Naive thymus-derived CD8-positive, alpha-beta T cell (primary cell): ENCODE measurements at regions of chr2 and their contacts with region 1.

Region 1: DNA sequence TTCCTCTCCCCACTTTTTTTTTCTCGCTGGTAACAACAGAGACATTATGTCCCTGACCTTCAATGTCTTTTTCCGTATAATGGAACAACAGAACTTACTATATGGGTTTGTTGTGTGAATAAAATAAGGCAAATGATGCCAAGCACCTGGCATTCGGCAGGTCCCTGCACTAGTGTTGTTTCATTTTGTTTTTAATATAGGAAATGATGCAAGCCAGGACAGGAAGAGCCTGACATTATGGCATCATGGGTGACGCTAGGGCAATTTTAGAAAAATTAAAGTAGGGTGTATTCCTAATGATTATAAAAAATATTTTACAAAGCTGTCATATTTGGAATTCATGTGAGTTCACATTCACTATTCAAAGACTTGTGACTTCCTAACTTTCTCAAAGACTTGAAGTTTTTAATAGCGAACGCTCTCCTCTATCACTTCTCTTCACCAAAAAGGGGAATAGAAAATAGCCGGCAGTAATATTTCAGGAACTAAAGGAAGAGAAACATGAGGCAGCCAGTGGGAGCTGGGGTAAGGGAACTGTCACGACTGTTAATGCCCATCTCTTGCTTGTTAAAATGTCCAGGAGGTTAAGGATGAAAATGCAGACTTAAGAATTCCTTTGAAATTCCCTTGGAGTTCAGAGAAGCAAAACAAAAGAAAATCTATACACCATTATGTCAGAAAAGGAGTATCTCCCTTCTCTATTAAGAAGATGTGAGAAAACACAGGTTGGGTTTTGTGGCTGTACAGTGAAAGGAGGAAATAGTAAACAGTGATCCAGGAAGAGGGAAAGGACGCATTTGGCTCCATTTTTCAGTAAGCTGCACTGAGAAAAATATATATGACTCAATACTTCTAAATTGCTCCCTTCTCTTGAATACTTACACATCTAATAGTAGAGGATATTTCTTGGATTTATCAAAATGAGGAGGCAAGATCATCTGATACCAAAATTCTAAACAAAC is 60.2 kb downstream of the DPP4 start:
- DNase-seq: peak in 5 of 10 donors; percentile 23 to 59 (median 41)
- ATAC-seq: peak in 1 of 2 donors; percentile 38
- H3K4me3 Mint-ChIP-seq: peak overlapping the region; percentile 16 to 84 (median 70)
- H3K27ac Mint-ChIP-seq: peak overlapping the region; percentile 93 to 99 (median 97)
- H3K4me1 Mint-ChIP-seq: peaks cover 30 to 71% (median 66%) of the 10 kb centered on the region in 4 donors
- H3K27me3 Mint-ChIP-seq: no peaks in the 10 kb centered on the region

Region 2: GRCh38 chr2:161998857-161999256 is 14.9 kb before region 1 on chr2:
- POLR2A ChIA-PET with region 1: interaction called, 13 read pairs
- DNase-seq: no peak
- ATAC-seq: no peak
- H3K4me3 Mint-ChIP-seq: no peak overlapping the region
- H3K27ac Mint-ChIP-seq: peak overlapping the region in 4 of 10 donors; percentile 5 to 83 (median 46)
- H3K4me1 Mint-ChIP-seq: peaks cover 27 to 54% (median 38%) of the 10 kb centered on the region in 4 donors
- H3K27me3 Mint-ChIP-seq: no peaks in the 10 kb centered on the region

Region 3: DNA sequence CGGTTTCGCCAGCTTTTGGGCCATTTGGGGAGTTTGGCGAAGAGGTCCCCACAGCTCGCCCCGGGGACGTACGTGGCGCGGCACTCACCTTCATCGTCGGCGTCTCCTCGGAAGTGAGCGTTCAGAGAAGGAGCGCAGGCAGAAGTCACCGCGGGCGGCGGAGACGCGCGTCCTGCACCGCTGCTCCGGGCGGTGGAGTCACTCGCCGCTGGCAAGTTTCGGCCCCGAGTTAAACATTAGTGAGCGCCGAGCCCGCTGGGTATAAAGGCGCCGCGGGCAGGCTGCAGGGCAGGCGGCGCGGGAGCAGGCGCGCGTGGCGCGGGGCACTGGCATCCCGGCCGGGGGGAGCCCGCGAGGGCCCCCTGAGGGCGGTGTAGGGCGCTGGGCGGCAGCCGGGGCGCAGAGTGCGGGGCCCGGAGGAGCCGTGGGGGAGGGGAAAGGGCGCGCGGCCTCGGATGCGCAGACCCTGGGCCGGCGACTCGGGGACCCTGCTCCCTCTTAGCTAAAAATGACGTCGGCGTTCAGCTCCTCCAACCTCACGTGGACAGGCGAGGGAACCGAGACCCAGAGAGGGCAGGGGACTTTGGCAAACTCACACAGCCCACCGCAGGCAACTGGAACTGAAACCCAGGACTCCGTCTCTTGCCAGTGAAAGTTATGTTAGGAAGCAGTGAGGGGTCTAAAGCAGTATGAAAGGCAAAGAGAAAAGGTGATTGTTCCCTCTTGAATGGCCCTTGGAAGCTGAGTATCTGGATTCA is 60.3 kb after region 1 on chr2 and contains the start of gene DPP4:
- POLR2A ChIA-PET with region 1: interaction called, 43 read pairs
- DNase-seq: peak; percentile 21 to 74 (median 55)
- ATAC-seq: peak; percentile 87 to 89
- H3K4me3 Mint-ChIP-seq: peak within 1 kb of the TSS; percentile 90 to 100 (median 96)
- H3K27ac Mint-ChIP-seq: peak within 1 kb of the TSS; percentile 82 to 99 (median 94)
- H3K4me1 Mint-ChIP-seq: peaks cover 30 to 50% (median 46%) of the 10 kb centered on the region in 4 donors
- H3K27me3 Mint-ChIP-seq: peaks cover 0 to 2% (median 0%) of the 10 kb centered on the region in 5 donors
- polyA plus RNA-seq, gene DPP4: 13.3 to 49.6 (median 44.4) TPM

Region 4: GRCh38 chr2:162085090-162085891 is 71.5 kb after region 1 on chr2:
- POLR2A ChIA-PET with region 1: no interaction called
- DNase-seq: no peak
- ATAC-seq: no peak
- H3K4me3 Mint-ChIP-seq: no peak overlapping the region
- H3K27ac Mint-ChIP-seq: no peak overlapping the region
- H3K4me1 Mint-ChIP-seq: peaks cover 0 to 7% (median 0%) of the 10 kb centered on the region in 4 donors
- H3K27me3 Mint-ChIP-seq: no peaks in the 10 kb centered on the region

Region 5: GRCh38 chr2:162123806-162124758 is 110.3 kb after region 1 on chr2:
- POLR2A ChIA-PET with region 1: no interaction called
- DNase-seq: peak in 4 of 10 donors; percentile 4 to 69 (median 67)
- ATAC-seq: peak in 1 of 2 donors; percentile 63
- H3K4me3 Mint-ChIP-seq: no peak overlapping the region
- H3K27ac Mint-ChIP-seq: peak overlapping the region in 1 of 10 donors; percentile 13
- H3K4me1 Mint-ChIP-seq: peaks cover 0 to 16% (median 1%) of the 10 kb centered on the region in 4 donors
- H3K27me3 Mint-ChIP-seq: no peaks in the 10 kb centered on the region